PC-9 (cell line): ENCODE measurements at regions of chr12 and their contacts with region 1.

Region 1: GRCh38 chr12:22334410-22335290 is at the start of gene ST8SIA1:
- DNase-seq: peak in 1 of 2 experiments; percentile 6
- H3K4me3 ChIP-seq: peak within 1 kb of the TSS; percentile 72
- H3K27ac ChIP-seq: no peak within 1 kb of the TSS
- H3K4me1 ChIP-seq: peaks cover 7% of the 10 kb centered on the region; the same call in 1 of the 2 replicates
- H3K27me3 ChIP-seq: no peaks in the 10 kb centered on the region
- CTCF ChIP-seq: no peak
- total RNA-seq, gene ST8SIA1: 2.4 and 3.1 TPM in 2 replicates

Region 2: GRCh38 chr12:21697904-21698630 is 636.6 kb before region 1 on chr12:
- CTCF ChIA-PET with region 1: no interaction called
- POLR2A ChIA-PET with region 1: no interaction called
- intact Hi-C with region 1: loop called (anchors 5 kb)
- DNase-seq: no peak
- H3K4me3 ChIP-seq: no peak overlapping the region
- H3K27ac ChIP-seq: no peak overlapping the region
- H3K4me1 ChIP-seq: no peaks in the 10 kb centered on the region
- H3K27me3 ChIP-seq: no peaks in the 10 kb centered on the region
- CTCF ChIP-seq: peak; percentile 84

Region 3: GRCh38 chr12:22083167-22083566 is 251.5 kb before region 1 on chr12:
- CTCF ChIA-PET with region 1: interaction called, 3 read pairs
- POLR2A ChIA-PET with region 1: no interaction called
- intact Hi-C with region 1: loop called (anchors 1 kb)
- DNase-seq: peak in 1 of 2 experiments; percentile 17
- H3K4me3 ChIP-seq: no peak overlapping the region
- H3K27ac ChIP-seq: no peak overlapping the region
- H3K4me1 ChIP-seq: no peaks in the 10 kb centered on the region
- H3K27me3 ChIP-seq: no peaks in the 10 kb centered on the region
- CTCF ChIP-seq: peak; percentile 80

Region 4: GRCh38 chr12:22088886-22089285 is 245.8 kb before region 1 on chr12:
- CTCF ChIA-PET with region 1: interaction called, 3 read pairs
- POLR2A ChIA-PET with region 1: interaction called, 6 read pairs
- intact Hi-C with region 1: loop called (anchors 2 kb)
- DNase-seq: no peak
- H3K4me3 ChIP-seq: no peak overlapping the region
- H3K27ac ChIP-seq: no peak overlapping the region
- H3K4me1 ChIP-seq: no peaks in the 10 kb centered on the region
- H3K27me3 ChIP-seq: no peaks in the 10 kb centered on the region
- CTCF ChIP-seq: no peak

Region 5: GRCh38 chr12:22100958-22101748 is 233.5 kb before region 1 on chr12:
- CTCF ChIA-PET with region 1: interaction called, 10 read pairs
- POLR2A ChIA-PET with region 1: no interaction called
- intact Hi-C with region 1: no loop called
- DNase-seq: peak; percentile 11 to 40
- H3K4me3 ChIP-seq: no peak overlapping the region
- H3K27ac ChIP-seq: no peak overlapping the region
- H3K4me1 ChIP-seq: no peaks in the 10 kb centered on the region
- H3K27me3 ChIP-seq: no peaks in the 10 kb centered on the region
- CTCF ChIP-seq: peak; percentile 65

Region 6: DNA sequence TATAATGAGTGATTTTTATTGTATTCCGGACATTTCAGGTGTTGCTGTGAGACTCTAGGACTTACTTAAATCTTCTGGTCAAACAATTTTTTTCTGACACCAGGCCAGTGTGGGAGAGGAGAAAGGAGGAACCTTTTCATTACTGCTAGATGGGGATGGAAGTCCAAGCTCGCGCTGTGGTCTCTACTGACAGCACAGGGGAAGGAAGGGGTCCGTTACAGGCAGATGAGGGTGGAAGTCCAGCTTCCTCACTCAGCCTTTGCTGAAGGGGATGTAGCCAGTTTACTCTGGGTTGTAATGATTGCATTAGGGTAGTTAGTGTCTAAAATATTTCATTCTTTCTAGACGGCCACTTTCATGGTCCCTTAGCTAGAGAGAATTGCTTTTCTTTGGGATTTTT is 26.1 kb after region 1 on chr12:
- CTCF ChIA-PET with region 1: no interaction called
- POLR2A ChIA-PET with region 1: no interaction called
- intact Hi-C with region 1: no loop called
- DNase-seq: no peak
- H3K4me3 ChIP-seq: no peak overlapping the region
- H3K27ac ChIP-seq: no peak overlapping the region
- H3K4me1 ChIP-seq: no peaks in the 10 kb centered on the region
- H3K27me3 ChIP-seq: no peaks in the 10 kb centered on the region
- CTCF ChIP-seq: no peak

Region 7: DNA sequence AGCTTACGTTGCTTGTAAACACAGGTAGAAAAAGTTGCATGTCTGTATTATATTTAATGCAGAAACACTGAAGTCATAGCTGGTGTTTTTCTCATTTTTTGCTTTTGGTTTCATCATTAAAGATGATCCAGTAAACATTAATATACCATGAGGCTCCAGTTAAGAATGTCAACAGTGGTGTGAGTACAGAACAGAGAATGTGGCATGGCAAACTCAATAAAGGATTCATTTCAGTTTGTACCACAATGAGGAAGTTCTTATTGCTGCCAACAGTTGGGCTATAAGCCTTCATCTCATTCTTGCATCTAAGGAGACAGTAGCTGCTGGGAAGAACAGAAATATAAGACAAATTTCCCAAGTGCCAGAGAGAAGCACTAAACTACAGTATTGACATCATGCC is 72.0 kb after region 1 on chr12:
- CTCF ChIA-PET with region 1: no interaction called
- POLR2A ChIA-PET with region 1: no interaction called
- intact Hi-C with region 1: no loop called
- DNase-seq: peak in 1 of 2 experiments; percentile 63
- H3K4me3 ChIP-seq: no peak overlapping the region
- H3K27ac ChIP-seq: no peak overlapping the region
- H3K4me1 ChIP-seq: peaks cover 32% of the 10 kb centered on the region
- H3K27me3 ChIP-seq: no peaks in the 10 kb centered on the region
- CTCF ChIP-seq: no peak

Region 8: GRCh38 chr12:22443379-22444316 is 109.0 kb after region 1 on chr12:
- CTCF ChIA-PET with region 1: interaction called, 20 read pairs
- POLR2A ChIA-PET with region 1: no interaction called
- intact Hi-C with region 1: loop called (anchors 1 kb)
- DNase-seq: peak; percentile 57 to 75
- H3K4me3 ChIP-seq: no peak overlapping the region
- H3K27ac ChIP-seq: no peak overlapping the region
- H3K4me1 ChIP-seq: no peaks in the 10 kb centered on the region; the same call in 1 of the 2 replicates
- H3K27me3 ChIP-seq: no peaks in the 10 kb centered on the region
- CTCF ChIP-seq: peak; percentile 87

Region 9: GRCh38 chr12:22544038-22544979 is 209.7 kb after region 1 on chr12 and contains the start of gene C2CD5:
- CTCF ChIA-PET with region 1: interaction called, 11 read pairs
- POLR2A ChIA-PET with region 1: no interaction called
- intact Hi-C with region 1: no loop called
- DNase-seq: peak; percentile 90 to 97
- H3K4me3 ChIP-seq: peak within 1 kb of the TSS; percentile 82
- H3K27ac ChIP-seq: peak within 1 kb of the TSS; percentile 71
- H3K4me1 ChIP-seq: peaks cover 9% of the 10 kb centered on the region; the same call in 1 of the 2 replicates
- H3K27me3 ChIP-seq: no peaks in the 10 kb centered on the region
- CTCF ChIP-seq: peak; percentile 32; the same call in 1 of the 2 replicates
- total RNA-seq, gene C2CD5: 27.5 and 28.6 TPM in 2 replicates